PC-9 (cell line): ENCODE measurements at regions of chr14 and their contacts with region 1.

Region 1: DNA sequence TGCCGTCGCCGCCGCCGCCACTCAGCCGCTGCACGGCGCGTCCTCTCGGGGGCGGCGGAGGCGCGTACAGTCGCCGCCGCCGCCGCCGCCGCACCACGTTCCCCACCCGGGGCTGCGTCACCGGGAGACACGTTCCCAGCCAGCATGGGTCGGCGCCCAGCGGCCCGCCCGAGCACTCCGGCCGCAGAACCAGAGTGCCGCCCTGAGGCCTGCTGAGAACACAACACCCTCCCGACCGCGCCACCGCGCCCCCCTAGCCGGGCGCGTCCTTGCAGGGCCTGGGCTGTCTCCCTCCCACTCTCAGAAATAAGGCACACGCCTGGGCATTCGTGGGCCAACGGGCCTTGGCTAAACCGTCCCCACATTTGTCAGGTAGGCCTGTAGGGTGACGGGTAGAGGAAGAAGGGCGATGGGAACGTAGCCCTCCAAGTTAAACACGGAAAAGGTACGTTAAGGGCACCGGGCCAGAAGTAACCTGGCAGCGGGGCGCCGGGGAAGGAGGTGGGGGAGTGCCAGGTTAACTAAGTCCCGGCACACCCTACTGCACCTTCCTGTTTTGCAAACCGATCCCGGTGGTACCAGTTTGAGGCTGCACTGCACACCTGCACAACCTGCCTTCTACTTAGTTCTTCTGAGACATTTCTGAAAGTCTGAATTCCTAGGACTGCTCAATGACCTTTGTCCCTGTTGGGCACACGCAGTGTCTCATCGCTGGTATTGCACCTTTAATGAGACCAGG is at the start of gene MAP4K5:
- DNase-seq: peak; percentile 88 to 92
- H3K4me3 ChIP-seq: peak within 1 kb of the TSS; percentile 92
- H3K27ac ChIP-seq: peak within 1 kb of the TSS; percentile 64
- H3K4me1 ChIP-seq: peaks cover 47% of the 10 kb centered on the region
- H3K27me3 ChIP-seq: no peaks in the 10 kb centered on the region
- CTCF ChIP-seq: peak; percentile 84
- total RNA-seq, gene MAP4K5: 51.8 and 66.6 TPM in 2 replicates

Region 2: DNA sequence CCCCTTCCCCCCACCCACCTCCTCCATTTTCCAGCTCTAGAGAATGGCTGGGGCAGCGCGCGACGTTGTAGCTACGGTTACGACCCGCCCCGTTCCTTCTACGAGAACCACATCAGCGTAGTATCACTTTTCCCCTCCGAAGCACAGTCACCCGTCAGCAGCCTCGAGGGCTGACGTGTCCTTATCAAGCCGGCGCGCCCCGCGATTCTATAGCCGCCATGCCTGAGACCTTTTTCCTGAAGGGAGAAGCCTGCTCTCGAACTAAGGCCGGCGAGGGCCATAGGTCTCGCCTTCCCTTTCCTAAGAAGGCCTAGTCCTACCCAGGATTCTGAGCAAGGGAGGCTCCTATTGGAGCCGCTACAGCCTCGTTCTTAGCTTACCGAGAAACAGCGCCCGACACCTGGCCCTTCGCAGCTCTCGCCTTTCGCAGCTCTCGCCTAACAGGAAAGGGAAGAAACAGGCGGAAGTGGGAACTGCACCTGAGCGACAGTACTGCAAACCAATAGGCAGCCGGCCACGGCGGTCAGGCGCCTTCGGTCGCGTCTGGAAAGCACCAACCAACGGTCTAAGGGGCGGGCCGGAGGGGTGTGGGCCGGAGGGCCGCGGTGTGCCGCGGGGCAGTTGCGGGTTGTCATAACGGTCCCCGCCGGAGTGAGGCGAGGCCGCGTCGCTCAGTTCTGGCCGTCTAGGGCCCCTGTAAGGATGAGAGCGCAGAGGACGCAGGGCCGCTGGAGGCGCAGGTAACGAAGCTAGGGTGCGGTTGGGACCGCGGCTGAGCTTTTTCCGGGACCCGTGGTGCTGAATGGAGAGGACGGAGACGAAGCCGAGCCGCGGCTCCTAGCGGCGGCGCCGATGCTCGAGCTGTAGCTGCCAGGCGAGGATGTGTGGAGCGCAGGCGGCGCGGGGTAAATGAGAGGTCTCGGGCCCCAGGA is 912.2 kb before region 1 on chr14 and contains the starts of genes MGAT2 and RPL36AL:
- CTCF ChIA-PET with region 1: no interaction called
- POLR2A ChIA-PET with region 1: no interaction called
- intact Hi-C with region 1: loop called (anchors 1 kb)
- DNase-seq: peak; percentile 92 to 98
- H3K4me3 ChIP-seq: peak within 1 kb of the TSS; percentile 100
- H3K27ac ChIP-seq: peak within 1 kb of the TSS; percentile 96
- H3K4me1 ChIP-seq: peaks cover 61% of the 10 kb centered on the region
- H3K27me3 ChIP-seq: no peaks in the 10 kb centered on the region
- CTCF ChIP-seq: no peak
- total RNA-seq, gene MGAT2: 18.9 and 22.0 TPM in 2 replicates
- total RNA-seq, gene RPL36AL: 120 and 151 TPM in 2 replicates

Region 3: GRCh38 chr14:50116181-50116956 is 416.3 kb before region 1 on chr14 and contains the start of gene VCPKMT:
- CTCF ChIA-PET with region 1: no interaction called
- POLR2A ChIA-PET with region 1: no interaction called
- intact Hi-C with region 1: loop called (anchors 5 kb)
- DNase-seq: peak; percentile 79 to 93
- H3K4me3 ChIP-seq: peak within 1 kb of the TSS; percentile 84
- H3K27ac ChIP-seq: peak within 1 kb of the TSS; percentile 66
- H3K4me1 ChIP-seq: peaks cover 22% of the 10 kb centered on the region
- H3K27me3 ChIP-seq: no peaks in the 10 kb centered on the region
- CTCF ChIP-seq: no peak
- total RNA-seq, gene VCPKMT: 6.5 and 9.4 TPM in 2 replicates

Region 4: DNA sequence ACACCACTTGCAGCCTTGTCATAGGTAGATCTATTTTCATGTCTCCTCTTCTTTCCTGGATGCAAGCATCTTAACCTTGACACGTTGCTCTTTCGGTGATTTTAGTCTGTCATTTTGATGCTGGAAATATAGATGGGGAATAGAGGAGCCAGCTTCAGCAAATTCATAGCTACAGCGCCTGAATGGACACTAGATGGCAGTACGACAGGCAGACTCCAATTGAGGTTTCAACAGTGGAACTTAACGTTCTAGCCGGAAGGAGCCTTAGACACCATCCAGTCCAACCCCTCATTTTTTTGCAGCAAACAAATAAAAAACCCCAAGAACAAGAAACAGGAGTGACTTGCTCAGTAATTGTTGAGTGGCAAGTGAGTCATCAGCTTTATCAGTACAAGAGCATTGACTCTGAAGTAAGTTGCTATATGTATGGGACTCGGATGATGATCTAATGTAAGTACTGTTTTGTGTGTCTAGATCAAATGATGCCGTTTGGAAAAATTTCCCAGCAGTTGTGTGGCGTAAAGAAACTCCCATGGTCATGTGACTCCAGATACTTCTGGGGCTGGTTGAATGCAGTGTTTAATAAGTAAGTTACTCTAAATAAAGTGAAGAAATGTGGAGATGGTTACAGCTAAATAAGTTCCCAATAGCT is 211.5 kb before region 1 on chr14:
- CTCF ChIA-PET with region 1: no interaction called
- POLR2A ChIA-PET with region 1: no interaction called
- intact Hi-C with region 1: loop called (anchors 1 kb)
- DNase-seq: peak; percentile 66 to 99
- H3K4me3 ChIP-seq: no peak overlapping the region
- H3K27ac ChIP-seq: peak overlapping the region; percentile 82
- H3K4me1 ChIP-seq: peaks cover 31% of the 10 kb centered on the region
- H3K27me3 ChIP-seq: no peaks in the 10 kb centered on the region
- CTCF ChIP-seq: peak; percentile 82

Region 5: DNA sequence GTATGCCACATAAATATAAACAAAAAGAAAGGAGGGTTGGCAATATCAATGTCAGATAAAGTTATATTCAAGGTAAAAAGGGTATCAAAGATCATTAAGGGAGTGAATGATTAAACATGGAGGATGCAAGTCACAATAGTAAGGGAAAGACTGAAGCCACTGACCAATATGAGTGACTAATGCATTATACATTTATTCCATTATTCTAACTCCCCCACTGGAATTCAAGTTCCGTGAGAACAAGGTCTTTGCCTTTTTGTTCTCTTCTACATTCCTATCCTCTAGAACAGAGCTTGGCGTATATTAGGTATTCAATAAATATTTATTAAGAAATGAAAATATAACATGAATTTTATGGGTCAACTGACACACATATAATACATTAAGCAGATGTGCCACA is 31.0 kb before region 1 on chr14:
- CTCF ChIA-PET with region 1: interaction called, 10 read pairs
- POLR2A ChIA-PET with region 1: interaction called, 3 read pairs
- intact Hi-C with region 1: no loop called
- DNase-seq: no peak
- H3K4me3 ChIP-seq: no peak overlapping the region
- H3K27ac ChIP-seq: no peak overlapping the region
- H3K4me1 ChIP-seq: no peaks in the 10 kb centered on the region
- H3K27me3 ChIP-seq: no peaks in the 10 kb centered on the region
- CTCF ChIP-seq: no peak